ENCODE measurements at regions of chr19 and their contacts with region 1.

Region 1: GRCh38 chr19:1863726-1864480 is 524 bp upstream of the KLF16 start:
- DNase-seq: peak; percentile 92 to 94 (median 94)
- H3K4me3 ChIP-seq: peak overlapping the region; percentile 23 to 76
- H3K4me3 Mint-ChIP-seq: peak overlapping the region; percentile 58 to 83 (median 74)
- H3K27ac ChIP-seq: peak overlapping the region; percentile 74
- H3K27ac Mint-ChIP-seq: peak overlapping the region in 5 of 7 donors; percentile 52 to 91 (median 88)
- H3K4me1 ChIP-seq: peaks cover 38% of the 10 kb centered on the region
- H3K4me1 Mint-ChIP-seq: peaks cover 8 to 41% (median 25%) of the 10 kb centered on the region in 4 donors
- H3K27me3 ChIP-seq: no peaks in the 10 kb centered on the region
- H3K27me3 Mint-ChIP-seq: no peaks in the 10 kb centered on the region

Region 2: DNA sequence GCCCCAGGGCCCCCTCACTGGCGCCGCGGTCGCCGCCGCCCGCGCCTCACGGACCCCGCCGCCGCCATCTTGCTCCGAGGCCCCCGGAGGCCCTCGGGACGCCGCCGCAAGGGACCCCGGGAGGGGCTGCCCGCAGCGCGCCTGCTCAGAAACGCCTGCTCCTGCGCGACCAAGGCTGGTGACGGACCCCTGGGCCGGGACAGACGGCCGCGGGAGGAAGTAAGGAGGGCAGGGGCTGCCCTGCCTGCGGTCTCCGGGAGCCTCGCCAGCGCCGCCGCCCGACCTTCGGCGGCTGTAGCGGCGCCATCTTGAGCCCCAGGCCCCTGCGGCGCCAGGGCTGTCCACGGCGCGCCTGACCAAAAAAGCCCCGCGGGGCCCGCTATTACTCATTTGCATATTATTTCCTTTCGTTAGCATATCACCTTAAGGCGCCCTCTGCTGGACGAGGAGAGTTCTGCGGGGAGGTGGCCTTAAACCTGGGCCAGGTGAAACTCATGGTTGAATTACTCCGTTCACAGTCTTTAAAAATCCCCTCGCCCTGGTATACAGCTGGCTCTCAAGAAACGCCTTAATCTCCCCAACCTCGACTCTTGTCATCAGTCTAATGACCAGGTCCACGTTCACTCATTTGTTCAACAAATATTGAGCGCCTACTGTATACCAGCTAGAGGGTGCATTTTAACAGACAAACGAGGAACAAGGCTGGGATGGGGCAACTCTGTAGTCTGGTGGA is 15.3 kb before region 1 on chr19 and contains the start of gene REXO1:
- CTCF ChIA-PET with region 1: interaction called, 4 read pairs
- POLR2A ChIA-PET with region 1: interaction called, 4 read pairs
- intact Hi-C with region 1: loop called (anchors 2 kb)
- DNase-seq: peak; percentile 97 to 100 (median 98)
- H3K4me3 ChIP-seq: peak within 1 kb of the TSS; percentile 73 to 92
- H3K4me3 Mint-ChIP-seq: peak within 1 kb of the TSS; percentile 87 to 93 (median 90)
- H3K27ac ChIP-seq: peak within 1 kb of the TSS; percentile 93
- H3K27ac Mint-ChIP-seq: peak within 1 kb of the TSS; percentile 91 to 94 (median 94)
- H3K4me1 ChIP-seq: peaks cover 75% of the 10 kb centered on the region
- H3K4me1 Mint-ChIP-seq: peaks cover 31 to 75% (median 50%) of the 10 kb centered on the region in 4 donors
- H3K27me3 ChIP-seq: no peaks in the 10 kb centered on the region
- H3K27me3 Mint-ChIP-seq: no peaks in the 10 kb centered on the region
- total RNA-seq, gene REXO1: 57.1 to 57.3 TPM

Region 3: GRCh38 chr19:1875646-1876495 is 12.0 kb after region 1 on chr19:
- CTCF ChIA-PET with region 1: interaction called, 12 read pairs
- POLR2A ChIA-PET with region 1: interaction called, 60 read pairs
- intact Hi-C with region 1: loop called (anchors 1 kb)
- DNase-seq: peak; percentile 80 to 87 (median 85)
- H3K4me3 ChIP-seq: peak overlapping the region; percentile 94 to 97
- H3K4me3 Mint-ChIP-seq: peak overlapping the region; percentile 93 to 99 (median 98)
- H3K27ac ChIP-seq: peak overlapping the region; percentile 92
- H3K27ac Mint-ChIP-seq: peak overlapping the region; percentile 89 to 99 (median 98)
- H3K4me1 ChIP-seq: peaks cover 46% of the 10 kb centered on the region
- H3K4me1 Mint-ChIP-seq: peaks cover 12 to 43% (median 20%) of the 10 kb centered on the region in 4 donors
- H3K27me3 ChIP-seq: no peaks in the 10 kb centered on the region
- H3K27me3 Mint-ChIP-seq: no peaks in the 10 kb centered on the region

Region 4: DNA sequence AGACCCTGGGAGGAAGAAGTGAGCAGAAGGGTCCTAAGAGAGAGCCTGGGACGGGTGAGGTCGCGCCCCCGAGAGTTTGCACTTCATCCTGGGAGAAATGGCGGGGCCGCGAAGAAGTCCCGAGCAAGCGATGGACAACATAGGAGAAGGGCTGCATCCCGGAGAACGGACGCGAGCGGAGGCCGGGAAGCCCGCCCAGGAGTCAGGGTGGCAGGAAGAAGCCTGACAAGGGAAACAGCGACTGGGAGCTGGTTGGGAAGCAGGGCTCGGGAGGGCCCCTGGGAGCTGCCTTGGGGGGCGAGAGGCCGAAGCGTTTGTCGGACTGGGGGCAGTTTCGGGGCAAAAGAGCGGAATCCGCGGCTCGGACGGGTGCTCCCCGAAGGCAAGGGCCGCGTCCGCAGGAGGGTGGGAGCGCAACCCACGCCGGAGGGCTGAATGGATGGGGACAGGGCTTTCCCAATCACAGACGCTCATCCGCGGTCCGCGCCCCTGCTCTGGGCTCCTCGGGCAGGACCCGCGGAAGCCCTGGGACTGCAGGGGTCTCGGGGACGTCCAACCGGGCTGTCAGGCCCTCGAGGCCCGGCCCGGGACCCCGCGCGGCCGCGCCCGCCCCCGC is 20.9 kb after region 1 on chr19:
- CTCF ChIA-PET with region 1: interaction called, 6 read pairs
- POLR2A ChIA-PET with region 1: interaction called, 41 read pairs
- intact Hi-C with region 1: loop called (anchors 1 kb)
- DNase-seq: peak in 1 of 5 donors; percentile 40
- H3K4me3 ChIP-seq: peak overlapping the region; percentile 69 to 93
- H3K4me3 Mint-ChIP-seq: peak overlapping the region; percentile 98 to 100 (median 100)
- H3K27ac ChIP-seq: peak overlapping the region; percentile 95
- H3K27ac Mint-ChIP-seq: peak overlapping the region; percentile 98 to 100 (median 99)
- H3K4me1 ChIP-seq: peaks cover 42% of the 10 kb centered on the region
- H3K4me1 Mint-ChIP-seq: peaks cover 13 to 43% (median 28%) of the 10 kb centered on the region in 4 donors
- H3K27me3 ChIP-seq: no peaks in the 10 kb centered on the region
- H3K27me3 Mint-ChIP-seq: peaks cover 0 to 3% of the 10 kb centered on the region in 2 donors

Region 5: DNA sequence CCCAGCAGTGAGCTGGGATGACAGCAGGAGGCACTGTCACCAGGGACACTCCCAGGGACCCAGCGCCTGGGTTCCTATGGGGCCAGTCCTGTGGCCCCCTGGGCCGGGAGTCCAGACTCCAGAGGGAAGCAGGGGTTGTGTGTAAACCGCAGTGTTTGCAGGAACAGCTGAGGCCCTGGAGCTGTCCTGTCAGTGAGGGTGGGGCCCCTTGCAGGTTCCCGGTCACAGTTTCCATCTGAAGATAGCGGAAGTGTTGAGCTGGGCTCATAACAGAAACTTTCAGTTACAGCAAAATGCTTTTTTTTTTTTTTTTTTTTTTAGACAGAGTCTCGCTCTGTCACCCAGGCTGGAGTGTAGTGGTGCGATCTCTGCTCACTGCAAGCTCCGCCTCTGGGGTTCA is 59.4 kb after region 1 on chr19:
- CTCF ChIA-PET with region 1: no interaction called
- POLR2A ChIA-PET with region 1: interaction called, 12 read pairs
- intact Hi-C with region 1: no loop called
- DNase-seq: peak; percentile 33 to 72 (median 47)
- H3K4me3 ChIP-seq: no peak overlapping the region
- H3K4me3 Mint-ChIP-seq: peak overlapping the region in 4 of 8 donors; percentile 24 to 43 (median 28)
- H3K27ac ChIP-seq: peak overlapping the region; percentile 30
- H3K27ac Mint-ChIP-seq: peak overlapping the region in 6 of 7 donors; percentile 29 to 84 (median 76)
- H3K4me1 ChIP-seq: peaks cover 39% of the 10 kb centered on the region
- H3K4me1 Mint-ChIP-seq: peaks cover 6 to 35% (median 14%) of the 10 kb centered on the region in 4 donors
- H3K27me3 ChIP-seq: no peaks in the 10 kb centered on the region
- H3K27me3 Mint-ChIP-seq: no peaks in the 10 kb centered on the region

Region 6: GRCh38 chr19:1942078-1942933 is 78.4 kb after region 1 on chr19:
- CTCF ChIA-PET with region 1: interaction called, 3 read pairs
- POLR2A ChIA-PET with region 1: interaction called, 3 read pairs
- intact Hi-C with region 1: loop called (anchors 1 kb)
- DNase-seq: peak; percentile 78 to 89 (median 84)
- H3K4me3 ChIP-seq: peak overlapping the region; percentile 81 to 99
- H3K4me3 Mint-ChIP-seq: peak overlapping the region; percentile 90 to 99 (median 97)
- H3K27ac ChIP-seq: peak overlapping the region; percentile 91
- H3K27ac Mint-ChIP-seq: peak overlapping the region; percentile 97 to 100 (median 99)
- H3K4me1 ChIP-seq: peaks cover 45% of the 10 kb centered on the region
- H3K4me1 Mint-ChIP-seq: peaks cover 15 to 49% (median 33%) of the 10 kb centered on the region in 4 donors
- H3K27me3 ChIP-seq: no peaks in the 10 kb centered on the region
- H3K27me3 Mint-ChIP-seq: peaks cover 0 to 2% of the 10 kb centered on the region in 2 donors